Activated naive CD4-positive, alpha-beta T cell treated with anti-CD3 and anti-CD28 coated beads for 36 hours (primary cell): ENCODE measurements at regions of chr3 and their contacts with region 1.

Region 1: GRCh38 chr3:5026331-5027218 is 47.3 kb downstream of the BHLHE40 start:
- DNase-seq: peak; percentile 86
- H3K4me3 Mint-ChIP-seq: peak overlapping the region; percentile 74
- H3K27ac Mint-ChIP-seq: peak overlapping the region; percentile 80
- H3K4me1 Mint-ChIP-seq: peaks cover 38% of the 10 kb centered on the region
- H3K27me3 Mint-ChIP-seq: no peaks in the 10 kb centered on the region

Region 2: DNA sequence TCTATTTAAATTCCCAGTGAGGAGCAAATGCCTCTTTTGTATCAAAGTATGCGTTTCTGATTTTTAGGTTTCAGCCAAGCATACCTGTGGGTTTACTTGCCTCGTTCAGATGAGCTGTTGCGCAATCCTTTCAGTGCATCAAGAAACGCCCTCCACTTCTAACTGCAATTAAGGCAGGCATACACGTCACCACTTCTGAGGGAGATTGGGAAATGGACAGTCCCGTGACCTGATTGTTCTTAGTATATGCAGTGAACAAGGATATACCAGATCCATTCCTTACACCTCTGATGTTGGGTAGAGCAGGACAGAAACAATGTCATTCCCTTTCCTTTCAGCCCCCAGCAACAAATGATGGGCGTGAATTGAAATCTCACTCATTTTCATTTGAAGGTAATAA is 314.4 kb before region 1 on chr3:
- CTCF ChIA-PET with region 1: interaction called, 48 read pairs
- intact Hi-C with region 1: loop called (anchors 1 kb)
- DNase-seq: no peak
- H3K4me3 Mint-ChIP-seq: no peak overlapping the region
- H3K27ac Mint-ChIP-seq: no peak overlapping the region
- H3K4me1 Mint-ChIP-seq: peaks cover 2% of the 10 kb centered on the region
- H3K27me3 Mint-ChIP-seq: no peaks in the 10 kb centered on the region

Region 3: GRCh38 chr3:4826237-4827100 is 200.1 kb before region 1 on chr3:
- CTCF ChIA-PET with region 1: interaction called, 3 read pairs
- intact Hi-C with region 1: loop called (anchors 1 kb)
- DNase-seq: no peak
- H3K4me3 Mint-ChIP-seq: no peak overlapping the region
- H3K27ac Mint-ChIP-seq: peak overlapping the region; percentile 57
- H3K4me1 Mint-ChIP-seq: peaks cover 93% of the 10 kb centered on the region
- H3K27me3 Mint-ChIP-seq: no peaks in the 10 kb centered on the region

Region 4: GRCh38 chr3:4888913-4889846 is 137.4 kb before region 1 on chr3:
- CTCF ChIA-PET with region 1: interaction called, 3 read pairs
- intact Hi-C with region 1: loop called (anchors 1 kb)
- DNase-seq: peak; percentile 61
- H3K4me3 Mint-ChIP-seq: no peak overlapping the region
- H3K27ac Mint-ChIP-seq: peak overlapping the region; percentile 85
- H3K4me1 Mint-ChIP-seq: peaks cover 40% of the 10 kb centered on the region
- H3K27me3 Mint-ChIP-seq: no peaks in the 10 kb centered on the region

Region 5: GRCh38 chr3:5006755-5007202 is 19.8 kb before region 1 on chr3:
- CTCF ChIA-PET with region 1: interaction called, 12 read pairs
- intact Hi-C with region 1: loop called (anchors 1 kb)
- DNase-seq: peak; percentile 95
- H3K4me3 Mint-ChIP-seq: peak overlapping the region; percentile 44
- H3K27ac Mint-ChIP-seq: peak overlapping the region; percentile 76
- H3K4me1 Mint-ChIP-seq: peaks cover 42% of the 10 kb centered on the region
- H3K27me3 Mint-ChIP-seq: peaks cover 7% of the 10 kb centered on the region